Activated naive CD4-positive, alpha-beta T cell treated with anti-CD3 and anti-CD28 coated beads for 36 hours (primary cell): ENCODE measurements at regions of chr15 and their contacts with region 1.

Region 1: DNA sequence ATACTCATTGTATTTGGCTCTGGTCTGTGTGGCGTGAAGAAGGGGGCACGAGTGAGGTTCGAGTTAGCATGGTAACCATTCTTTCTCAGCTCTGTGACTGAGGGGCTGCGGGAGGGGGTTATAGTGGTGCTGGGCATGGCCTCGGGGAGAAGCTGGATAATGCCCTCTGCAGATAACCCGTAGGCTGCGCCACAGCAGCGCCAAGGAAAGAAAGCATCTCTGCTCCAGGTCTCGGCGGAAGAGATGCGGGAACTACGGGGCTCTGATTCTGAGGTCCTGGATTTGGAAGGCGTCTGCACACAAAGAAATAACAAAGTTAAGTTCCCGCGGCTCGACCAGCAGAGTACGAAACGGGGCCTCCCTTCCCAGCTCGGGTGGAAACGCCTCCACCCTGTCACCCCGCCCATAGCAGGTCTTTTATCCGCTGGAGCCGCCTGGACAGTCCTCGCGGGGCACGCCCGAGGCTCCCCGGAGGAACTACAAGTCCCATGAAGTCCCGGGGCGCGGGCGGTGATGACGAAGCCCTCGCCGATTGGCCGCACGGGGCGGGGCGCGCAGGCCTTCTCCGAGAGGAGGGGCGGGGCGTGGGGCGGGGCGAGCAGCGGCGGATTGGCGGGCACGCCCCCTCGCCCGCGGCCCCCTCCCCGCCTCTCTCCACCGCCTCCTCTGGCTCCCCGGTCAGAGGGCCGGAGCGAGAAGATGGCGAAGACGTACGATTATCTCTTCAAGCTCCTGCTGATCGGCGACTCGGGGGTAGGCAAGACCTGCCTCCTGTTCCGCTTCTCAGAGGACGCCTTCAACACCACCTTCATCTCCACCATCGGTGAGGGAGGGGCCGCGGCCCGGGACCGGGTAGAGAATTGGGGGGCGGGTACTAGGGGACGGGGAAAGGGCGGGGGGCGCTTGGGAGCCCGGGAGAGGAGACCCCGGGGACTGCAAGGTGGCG is at the start of gene RAB8B:
- DNase-seq: peak; percentile 98
- H3K4me3 Mint-ChIP-seq: peak within 1 kb of the TSS; percentile 99
- H3K27ac Mint-ChIP-seq: peak within 1 kb of the TSS; percentile 99
- H3K4me1 Mint-ChIP-seq: peaks cover 42% of the 10 kb centered on the region
- H3K27me3 Mint-ChIP-seq: no peaks in the 10 kb centered on the region
- total RNA-seq, gene RAB8B: 91.5 to 93.1 TPM

Region 2: GRCh38 chr15:62904041-62904910 is 284.9 kb before region 1 on chr15:
- CTCF ChIA-PET with region 1: no interaction called
- intact Hi-C with region 1: no loop called
- DNase-seq: no peak
- H3K4me3 Mint-ChIP-seq: no peak overlapping the region
- H3K27ac Mint-ChIP-seq: no peak overlapping the region
- H3K4me1 Mint-ChIP-seq: no peaks in the 10 kb centered on the region
- H3K27me3 Mint-ChIP-seq: no peaks in the 10 kb centered on the region

Region 3: GRCh38 chr15:63121382-63122001 is 67.7 kb before region 1 on chr15 and contains the start of gene LACTB:
- CTCF ChIA-PET with region 1: no interaction called
- intact Hi-C with region 1: loop called (anchors 1 kb)
- DNase-seq: peak; percentile 86
- H3K4me3 Mint-ChIP-seq: peak within 1 kb of the TSS; percentile 71
- H3K27ac Mint-ChIP-seq: peak within 1 kb of the TSS; percentile 61
- H3K4me1 Mint-ChIP-seq: peaks cover 14% of the 10 kb centered on the region
- H3K27me3 Mint-ChIP-seq: no peaks in the 10 kb centered on the region
- total RNA-seq, gene LACTB: 18.3 to 18.7 TPM

Region 4: DNA sequence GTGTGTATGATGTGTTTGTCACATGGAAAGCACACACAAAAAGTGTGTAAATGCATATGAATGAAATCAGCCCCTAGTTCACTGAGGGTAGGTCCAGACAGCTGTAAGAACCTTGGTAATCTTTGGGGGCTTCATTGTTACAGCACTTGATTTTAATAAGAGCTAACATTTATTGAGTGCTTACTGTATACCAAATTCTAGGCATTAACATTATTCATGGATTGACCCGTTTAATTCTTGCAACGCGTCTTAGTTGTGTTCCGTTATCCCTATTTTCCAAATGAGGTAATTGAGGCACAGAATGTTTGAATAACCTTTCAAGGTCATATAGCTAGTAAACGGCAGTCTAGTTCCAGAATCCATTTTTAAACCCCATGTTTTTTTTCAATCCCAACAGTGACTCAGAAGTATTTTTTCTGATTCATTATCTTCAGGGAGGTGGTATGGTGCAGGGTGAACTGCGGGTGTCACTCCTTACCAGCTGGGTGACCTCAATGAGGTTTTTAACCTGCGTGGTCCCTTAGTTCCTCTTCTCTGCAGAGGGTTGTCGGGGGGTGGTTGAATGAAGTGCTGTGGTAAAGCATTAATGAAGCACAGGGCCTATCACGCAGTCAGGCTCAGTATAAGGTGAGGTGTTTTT is 14.4 kb after region 1 on chr15:
- CTCF ChIA-PET with region 1: interaction called, 12 read pairs
- intact Hi-C with region 1: loop called (anchors 1 kb)
- DNase-seq: peak; percentile 75
- H3K4me3 Mint-ChIP-seq: no peak overlapping the region
- H3K27ac Mint-ChIP-seq: peak overlapping the region; percentile 67
- H3K4me1 Mint-ChIP-seq: peaks cover 88% of the 10 kb centered on the region
- H3K27me3 Mint-ChIP-seq: no peaks in the 10 kb centered on the region

Region 5: GRCh38 chr15:63277038-63277892 is 88.1 kb after region 1 on chr15 and contains the start of gene APH1B:
- CTCF ChIA-PET with region 1: interaction called, 6 read pairs
- intact Hi-C with region 1: loop called (anchors 1 kb)
- DNase-seq: peak; percentile 63
- H3K4me3 Mint-ChIP-seq: peak within 1 kb of the TSS; percentile 89
- H3K27ac Mint-ChIP-seq: peak within 1 kb of the TSS; percentile 75
- H3K4me1 Mint-ChIP-seq: peaks cover 33% of the 10 kb centered on the region
- H3K27me3 Mint-ChIP-seq: no peaks in the 10 kb centered on the region
- total RNA-seq, gene APH1B: 6.7 to 8.6 TPM

Region 6: DNA sequence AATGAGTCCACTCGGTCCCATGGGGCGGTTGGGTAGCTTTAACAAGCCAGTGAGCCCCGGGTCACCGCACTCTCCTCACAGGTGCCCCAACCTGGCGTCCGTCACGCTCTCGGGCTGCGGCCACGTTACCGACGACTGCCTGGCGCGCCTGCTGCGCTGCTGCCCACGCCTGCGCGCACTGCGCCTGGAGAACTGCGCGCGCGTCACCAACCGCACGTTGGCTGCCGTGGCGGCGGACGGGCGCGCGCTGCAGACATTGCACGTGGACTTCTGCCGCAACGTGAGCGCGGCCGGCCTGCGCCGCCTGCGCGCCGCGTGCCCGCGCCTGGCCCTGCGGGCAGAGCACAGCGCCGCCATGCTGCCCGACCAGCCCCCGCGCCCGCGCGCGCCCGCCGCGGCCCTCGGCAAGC is 411.4 kb after region 1 on chr15:
- CTCF ChIA-PET with region 1: no interaction called
- intact Hi-C with region 1: loop called (anchors 5 kb)
- DNase-seq: peak; percentile 87
- H3K4me3 Mint-ChIP-seq: peak overlapping the region; percentile 90
- H3K27ac Mint-ChIP-seq: peak overlapping the region; percentile 93
- H3K4me1 Mint-ChIP-seq: peaks cover 54% of the 10 kb centered on the region
- H3K27me3 Mint-ChIP-seq: no peaks in the 10 kb centered on the region